Caco-2 (cell line): ENCODE measurements at regions of chr11 and their contacts with region 1.

Region 1: GRCh38 chr11:57311109-57311936 is 13.4 kb downstream of the TNKS1BP1 start:
- DNase-seq: peak; percentile 94 to 96
- H3K4me3 ChIP-seq: peak overlapping the region; percentile 55
- H3K4me3 Mint-ChIP-seq: peak overlapping the region; percentile 72
- H3K27ac Mint-ChIP-seq: peak overlapping the region; percentile 47
- H3K4me1 ChIP-seq: peaks cover 40% of the 10 kb centered on the region
- H3K4me1 Mint-ChIP-seq: peaks cover 35% of the 10 kb centered on the region
- H3K27me3 ChIP-seq: no peaks in the 10 kb centered on the region
- H3K27me3 Mint-ChIP-seq: no peaks in the 10 kb centered on the region
- CTCF ChIP-seq: no peak

Region 2: GRCh38 chr11:57260937-57261783 is 50.2 kb before region 1 on chr11:
- CTCF ChIA-PET with region 1: no interaction called
- POLR2A ChIA-PET with region 1: no interaction called
- intact Hi-C with region 1: no loop called
- DNase-seq: no peak
- H3K4me3 ChIP-seq: no peak overlapping the region
- H3K4me3 Mint-ChIP-seq: no peak overlapping the region
- H3K27ac Mint-ChIP-seq: no peak overlapping the region
- H3K4me1 ChIP-seq: no peaks in the 10 kb centered on the region
- H3K4me1 Mint-ChIP-seq: no peaks in the 10 kb centered on the region
- H3K27me3 ChIP-seq: no peaks in the 10 kb centered on the region
- H3K27me3 Mint-ChIP-seq: peaks cover 5% of the 10 kb centered on the region
- CTCF ChIP-seq: no peak

Region 3: DNA sequence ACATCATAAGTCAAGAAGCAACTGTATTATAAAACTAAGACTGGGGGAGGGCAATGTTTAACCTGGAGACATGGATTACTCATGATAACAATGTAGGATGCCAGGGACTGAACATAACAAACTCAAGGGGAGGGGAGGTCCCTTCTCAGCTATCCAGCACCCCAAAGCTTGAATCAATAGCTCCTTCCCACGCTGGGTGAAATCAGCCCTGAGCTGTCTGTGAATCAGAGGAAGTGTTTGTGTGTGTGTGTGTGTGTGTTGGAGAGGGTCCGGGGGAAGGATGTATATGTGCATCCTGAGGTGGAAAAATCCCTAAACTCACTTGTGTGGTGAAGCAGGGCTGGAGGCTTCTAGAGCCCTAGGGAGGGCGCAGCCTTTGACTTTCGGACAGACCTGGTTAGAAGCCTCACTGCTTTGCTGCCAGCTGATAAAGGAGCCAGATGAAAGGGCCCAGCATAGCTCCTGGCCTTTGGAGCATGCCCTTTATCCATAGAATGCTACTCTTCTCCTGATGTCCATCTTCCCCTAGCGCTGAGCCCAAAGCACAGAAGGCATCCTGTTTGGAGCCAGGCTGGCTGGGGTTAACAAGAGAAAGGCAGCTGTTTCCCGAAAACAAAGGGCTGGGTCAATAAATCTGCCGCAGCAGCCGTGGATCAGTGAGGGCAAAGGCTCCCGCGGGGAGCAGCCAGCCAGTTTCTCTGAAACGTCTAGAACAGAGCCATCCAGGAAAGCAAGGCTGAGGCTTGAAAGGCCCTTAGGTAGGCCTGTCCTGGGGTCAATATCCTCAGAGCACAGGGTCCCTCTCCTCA is 22.3 kb before region 1 on chr11:
- CTCF ChIA-PET with region 1: interaction called, 3 read pairs
- POLR2A ChIA-PET with region 1: no interaction called
- intact Hi-C with region 1: loop called (anchors 1 kb)
- DNase-seq: peak in 1 of 2 experiments; percentile 51
- H3K4me3 ChIP-seq: no peak overlapping the region
- H3K4me3 Mint-ChIP-seq: peak overlapping the region; percentile 34
- H3K27ac Mint-ChIP-seq: peak overlapping the region; percentile 55
- H3K4me1 ChIP-seq: peaks cover 60% of the 10 kb centered on the region
- H3K4me1 Mint-ChIP-seq: peaks cover 55% of the 10 kb centered on the region
- H3K27me3 ChIP-seq: no peaks in the 10 kb centered on the region
- H3K27me3 Mint-ChIP-seq: no peaks in the 10 kb centered on the region
- CTCF ChIP-seq: no peak